ENCODE measurements at regions of chr2 and their contacts with region 1.

Region 1: DNA sequence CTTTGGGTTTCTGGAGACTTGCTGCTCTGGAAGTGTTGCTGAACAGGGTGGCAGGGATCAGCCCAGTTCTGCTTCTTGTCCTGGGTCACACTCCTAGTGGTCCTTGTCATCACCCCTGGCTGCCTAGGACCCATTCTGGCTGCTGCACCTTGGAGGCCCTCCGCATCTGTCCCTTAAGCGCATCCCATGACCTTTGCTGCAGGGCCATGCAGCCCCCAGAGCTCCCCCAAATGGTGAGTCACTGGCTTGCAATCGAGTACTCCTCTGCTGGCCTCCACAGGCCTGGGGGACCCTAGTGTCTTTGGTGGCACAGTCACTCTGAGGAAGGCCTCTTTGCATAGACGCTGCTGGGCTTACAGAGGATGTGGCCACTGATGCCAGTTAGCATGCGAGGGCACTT is 188.5 kb downstream of the ASB1 start:
- DNase-seq: peak in 1 of 2 donors; percentile 45
- H3K4me3 ChIP-seq: no peak overlapping the region
- CTCF ChIP-seq: no peak
- POLR2A ChIP-seq: no peak

Region 2: DNA sequence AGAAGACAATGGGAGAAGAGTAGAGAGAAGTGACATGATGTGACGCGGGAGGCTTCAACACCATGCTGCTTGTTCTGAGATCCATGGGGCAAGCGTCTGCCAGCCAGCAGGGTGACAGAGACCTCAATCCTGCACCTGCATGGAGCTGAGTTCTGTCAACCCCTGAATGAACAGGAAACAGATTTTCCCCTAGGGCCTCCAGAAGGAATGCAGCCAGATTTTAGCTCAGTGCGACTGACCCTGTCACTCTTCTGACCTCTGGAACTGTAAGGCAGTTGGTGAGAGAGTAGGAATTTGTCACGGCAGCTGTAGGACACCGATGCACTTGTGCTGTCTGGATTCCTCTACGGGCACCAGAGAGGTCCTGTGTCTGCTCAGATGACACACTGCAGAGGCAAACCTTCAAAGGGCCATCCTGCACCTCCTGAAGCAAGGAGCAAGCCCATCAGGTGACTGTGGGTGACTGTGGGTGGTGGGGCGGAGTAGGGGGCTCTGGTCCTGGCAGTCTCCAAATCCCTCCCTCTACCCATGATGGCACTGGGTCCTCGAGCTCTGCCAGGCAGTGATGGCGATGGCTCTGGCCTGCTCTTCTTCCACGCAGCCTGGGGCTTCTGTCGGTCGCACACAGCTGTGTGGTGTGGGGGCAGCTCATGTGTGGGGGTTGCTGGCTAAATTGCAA is 38.4 kb after region 1 on chr2:
- intact Hi-C with region 1: no loop called
- DNase-seq: peak; percentile 11 to 43
- H3K4me3 ChIP-seq: no peak overlapping the region
- CTCF ChIP-seq: no peak
- POLR2A ChIP-seq: no peak

Region 3: GRCh38 chr2:239380831-239381708 is 765.9 kb after region 1 on chr2:
- intact Hi-C with region 1: loop called (anchors 5 kb)
- DNase-seq: peak in 1 of 2 donors; percentile 84
- H3K4me3 ChIP-seq: no peak overlapping the region
- CTCF ChIP-seq: no peak
- POLR2A ChIP-seq: no peak

Measured in lower leg skin (tissue), 4 donors.